ENCODE measurements at regions of chr16 and their contacts with region 1.

Region 1: GRCh38 chr16:89241187-89242007 is 23.9 kb downstream of the ZNF778 start:
- DNase-seq: peak; percentile 80 to 81
- ATAC-seq: peak; percentile 82 to 92
- H3K4me3 ChIP-seq: peak overlapping the region; percentile 74
- H3K27ac ChIP-seq: peak overlapping the region; percentile 94 to 95
- H3K4me1 ChIP-seq: no peaks in the 10 kb centered on the region
- CTCF ChIP-seq: no peak
- EP300 ChIP-seq: no peak
- POLR2A ChIP-seq: peak; percentile 84
- RAD21 ChIP-seq: no peak

Region 2: DNA sequence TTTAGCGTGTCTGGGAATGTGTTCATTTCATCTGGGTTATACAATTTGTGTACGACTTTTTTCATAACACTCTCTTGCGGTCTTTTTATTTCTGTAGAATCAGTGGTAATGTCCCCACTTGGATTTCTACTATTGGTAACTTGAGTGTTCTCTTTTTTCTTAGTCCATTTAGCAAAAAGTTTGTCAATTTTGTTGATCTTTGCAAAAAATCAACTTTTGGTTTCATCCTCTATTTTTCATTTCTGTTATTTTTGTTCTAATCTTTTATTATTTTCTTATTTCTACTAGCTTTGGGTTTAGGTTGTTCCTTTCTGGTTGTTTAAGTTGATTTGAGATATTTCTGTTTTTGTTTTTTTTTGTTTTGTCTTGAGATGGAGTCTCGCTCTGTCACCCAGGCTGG is 33.4 kb before region 1 on chr16:
- CTCF ChIA-PET with region 1: interaction called, 10 read pairs
- POLR2A ChIA-PET with region 1: no interaction called
- DNase-seq: no peak
- ATAC-seq: no peak
- H3K4me3 ChIP-seq: no peak overlapping the region
- H3K27ac ChIP-seq: no peak overlapping the region
- H3K4me1 ChIP-seq: no peaks in the 10 kb centered on the region
- CTCF ChIP-seq: no peak
- EP300 ChIP-seq: no peak
- POLR2A ChIP-seq: no peak
- RAD21 ChIP-seq: no peak

Measured in A549 (cell line).